ENCODE measurements at regions of chr19 and their contacts with region 1.

Region 1: GRCh38 chr19:49896863-49897621 is at the start of gene IL4I1:
- DNase-seq: peak; percentile 40
- H3K4me3 Mint-ChIP-seq: peak within 1 kb of the TSS; percentile 73
- H3K27ac Mint-ChIP-seq: peak within 1 kb of the TSS; percentile 98
- H3K4me1 Mint-ChIP-seq: peaks cover 30% of the 10 kb centered on the region
- H3K27me3 Mint-ChIP-seq: no peaks in the 10 kb centered on the region
- total RNA-seq, gene IL4I1: 42.3 and 42.4 TPM in 2 replicates

Region 2: GRCh38 chr19:49555600-49556411 is 341.2 kb before region 1 on chr19:
- intact Hi-C with region 1: no loop called
- DNase-seq: peak; percentile 73
- H3K4me3 Mint-ChIP-seq: no peak overlapping the region
- H3K27ac Mint-ChIP-seq: peak overlapping the region; percentile 99
- H3K4me1 Mint-ChIP-seq: peaks cover 61% of the 10 kb centered on the region
- H3K27me3 Mint-ChIP-seq: no peaks in the 10 kb centered on the region

Region 3: GRCh38 chr19:49911381-49912145 is 14.5 kb after region 1 on chr19:
- intact Hi-C with region 1: loop called (anchors 2 kb)
- DNase-seq: no peak
- H3K4me3 Mint-ChIP-seq: peak overlapping the region; percentile 59
- H3K27ac Mint-ChIP-seq: peak overlapping the region; percentile 88
- H3K4me1 Mint-ChIP-seq: peaks cover 41% of the 10 kb centered on the region
- H3K27me3 Mint-ChIP-seq: no peaks in the 10 kb centered on the region

Region 4: DNA sequence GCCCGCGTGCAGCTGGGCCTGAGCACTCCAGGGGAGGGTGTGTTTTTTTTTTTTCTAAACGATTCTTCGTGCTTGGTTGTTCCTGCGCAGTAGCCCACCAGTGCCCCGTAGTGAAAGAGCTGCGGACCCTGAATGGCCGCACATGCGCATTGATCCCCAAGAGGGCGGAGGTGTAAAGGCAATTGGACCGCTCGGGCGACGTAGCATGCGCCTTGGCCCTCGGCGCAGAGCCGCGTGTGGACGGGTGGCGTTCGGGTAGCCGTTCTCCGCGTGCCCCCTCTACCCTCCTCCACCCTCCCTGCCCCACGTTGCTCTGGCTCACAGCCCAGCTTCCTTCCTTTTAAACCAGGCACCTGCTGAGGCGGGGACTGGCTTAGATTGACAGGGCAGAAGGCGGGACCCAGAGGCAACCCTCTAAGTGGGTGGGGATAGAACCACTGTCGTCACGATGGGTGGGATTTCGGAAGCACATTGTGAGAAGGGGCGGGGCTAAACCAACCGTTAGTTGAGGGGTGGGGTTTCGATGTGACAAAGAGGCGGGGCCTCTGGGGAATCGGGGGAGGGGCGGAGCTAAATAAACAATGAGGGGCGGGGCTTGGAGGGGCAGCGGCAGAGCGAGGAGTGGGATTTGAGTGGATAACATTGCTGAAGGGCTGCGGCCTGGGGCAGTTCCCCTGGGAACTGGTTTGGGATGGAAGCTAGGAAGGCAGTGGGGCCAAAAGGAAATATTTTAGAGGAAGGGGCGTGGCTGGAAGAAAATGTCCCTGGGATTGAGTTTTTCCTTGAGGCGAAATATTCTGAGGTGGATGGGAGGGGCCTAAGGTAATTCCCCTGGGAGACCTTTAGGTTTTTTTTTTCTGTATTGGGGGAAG is 32.8 kb after region 1 on chr19:
- intact Hi-C with region 1: loop called (anchors 2 kb)
- DNase-seq: peak; percentile 92
- H3K4me3 Mint-ChIP-seq: peak overlapping the region; percentile 98
- H3K27ac Mint-ChIP-seq: peak overlapping the region; percentile 98
- H3K4me1 Mint-ChIP-seq: peaks cover 36% of the 10 kb centered on the region
- H3K27me3 Mint-ChIP-seq: no peaks in the 10 kb centered on the region